ENCODE measurements at regions of chr17 and their contacts with region 1.

Region 1: GRCh38 chr17:75430159-75430974 is 24.9 kb upstream of the GRB2 start:
- DNase-seq: no peak
- ATAC-seq: peak; percentile 48 to 72 (median 50)
- H3K4me3 ChIP-seq: peak overlapping the region; percentile 15
- H3K27ac ChIP-seq: peak overlapping the region; percentile 82
- H3K4me1 ChIP-seq: peaks cover 19% of the 10 kb centered on the region
- H3K27me3 ChIP-seq: no peaks in the 10 kb centered on the region
- CTCF ChIP-seq: no peak

Region 2: GRCh38 chr17:75521951-75522742 is 91.8 kb after region 1 on chr17:
- intact Hi-C with region 1: no loop called
- DNase-seq: no peak
- ATAC-seq: no peak
- H3K4me3 ChIP-seq: no peak overlapping the region
- H3K27ac ChIP-seq: no peak overlapping the region
- H3K4me1 ChIP-seq: peaks cover 19% of the 10 kb centered on the region
- H3K27me3 ChIP-seq: peaks cover 0 to 12% (median 0%) of the 10 kb centered on the region in 3 donors
- CTCF ChIP-seq: no peak

Region 3: DNA sequence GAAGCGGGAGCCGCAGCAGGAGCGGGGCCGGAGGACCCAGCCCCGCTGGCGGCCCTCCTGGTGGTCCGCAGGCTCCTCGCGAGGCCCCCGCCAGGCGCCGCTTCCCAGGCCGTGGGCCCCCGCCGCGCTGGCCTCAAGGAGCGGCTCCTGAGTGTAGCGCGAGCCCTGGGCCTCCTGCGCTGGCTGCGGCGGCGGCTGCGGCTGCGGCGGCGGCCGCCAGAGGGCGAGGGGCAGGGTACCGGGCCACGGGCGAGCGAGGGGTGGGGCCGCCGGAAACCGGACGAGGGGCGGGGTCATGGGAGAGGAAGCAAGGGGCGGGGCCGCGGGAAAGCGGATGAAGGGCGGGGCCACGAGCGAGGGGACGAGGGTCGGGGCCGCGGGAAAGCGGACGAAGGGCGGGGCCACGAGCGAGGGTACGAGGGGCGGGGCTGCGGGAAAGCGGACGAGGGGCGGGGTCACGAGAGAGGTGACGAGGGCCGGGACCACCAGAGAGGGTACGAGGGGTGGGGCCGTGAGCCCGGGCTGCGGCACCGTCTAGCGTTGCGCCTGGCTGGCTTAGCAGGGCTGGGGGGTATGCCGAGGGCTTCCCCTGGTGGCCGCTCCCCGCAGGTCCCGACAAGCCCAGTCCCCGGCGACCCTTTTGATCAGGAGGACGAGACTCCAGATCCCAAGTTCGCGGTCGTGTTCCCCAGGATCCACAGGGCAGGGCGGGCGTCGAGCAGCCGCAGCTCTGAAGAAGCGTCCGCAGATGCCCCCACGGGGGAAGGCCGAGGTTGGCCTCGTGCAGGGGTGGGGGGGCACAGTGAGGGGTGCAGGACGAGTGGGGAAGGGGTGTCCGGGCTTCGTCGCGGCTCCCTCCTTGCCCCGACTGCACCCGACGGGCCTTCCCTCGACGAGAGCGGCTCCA is 158.9 kb after region 1 on chr17:
- intact Hi-C with region 1: loop called in 1 of 2 experiments (anchors 2 kb)
- DNase-seq: peak; percentile 97 to 98
- ATAC-seq: peak; percentile 91 to 95 (median 94)
- H3K4me3 ChIP-seq: peak overlapping the region; percentile 76
- H3K27ac ChIP-seq: peak overlapping the region; percentile 76
- H3K4me1 ChIP-seq: peaks cover 3% of the 10 kb centered on the region
- H3K27me3 ChIP-seq: peaks cover 0 to 11% (median 6%) of the 10 kb centered on the region in 3 donors
- CTCF ChIP-seq: peak; percentile 58

Region 4: DNA sequence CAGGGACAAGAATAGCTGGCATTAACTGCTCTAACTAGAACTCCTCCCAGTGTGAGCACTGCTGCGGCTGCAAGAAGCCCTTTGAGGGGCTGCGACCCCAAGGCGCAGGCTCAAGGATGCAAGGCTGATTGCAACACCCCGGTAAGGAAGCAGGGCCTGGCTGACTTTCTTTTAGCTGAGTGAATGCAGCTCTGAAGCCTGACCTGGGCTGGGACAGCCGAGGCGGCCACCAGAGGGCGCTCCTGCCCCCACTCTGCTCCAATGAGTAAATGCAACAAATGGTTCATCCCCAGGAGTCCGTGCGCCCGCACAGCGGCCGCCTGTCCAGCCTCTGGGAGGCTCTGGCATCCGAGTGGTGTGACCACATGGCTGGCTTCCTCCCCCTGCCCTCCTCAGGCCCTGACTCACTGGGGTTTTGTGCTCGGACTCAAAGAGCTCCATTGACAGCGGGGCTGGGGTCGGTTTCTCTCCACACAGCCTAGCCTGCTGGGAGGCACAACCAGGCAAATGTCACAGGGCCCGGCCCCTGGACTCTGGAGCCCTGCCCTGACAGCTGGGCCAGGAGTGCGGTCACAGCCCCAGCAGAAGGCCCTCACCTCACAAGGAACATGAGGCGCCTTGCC is 202.6 kb after region 1 on chr17 and contains the start of gene SMIM5:
- intact Hi-C with region 1: loop called in 1 of 2 experiments (anchors 5 kb)
- DNase-seq: peak; percentile 90 to 95
- ATAC-seq: peak; percentile 75 to 88 (median 78)
- H3K4me3 ChIP-seq: peak within 1 kb of the TSS; percentile 33
- H3K27ac ChIP-seq: peak within 1 kb of the TSS; percentile 78
- H3K4me1 ChIP-seq: peaks cover 46% of the 10 kb centered on the region
- H3K27me3 ChIP-seq: no peaks in the 10 kb centered on the region
- CTCF ChIP-seq: peak; percentile 97
- total RNA-seq, gene SMIM5: 0.11 to 0.28 (median 0.17) TPM in 3 of 4 donors, not detected in the other

Measured in psoas muscle (tissue), 8 donors.